ENCODE measurements at regions of chr2 and their contacts with region 1.

Region 1: DNA sequence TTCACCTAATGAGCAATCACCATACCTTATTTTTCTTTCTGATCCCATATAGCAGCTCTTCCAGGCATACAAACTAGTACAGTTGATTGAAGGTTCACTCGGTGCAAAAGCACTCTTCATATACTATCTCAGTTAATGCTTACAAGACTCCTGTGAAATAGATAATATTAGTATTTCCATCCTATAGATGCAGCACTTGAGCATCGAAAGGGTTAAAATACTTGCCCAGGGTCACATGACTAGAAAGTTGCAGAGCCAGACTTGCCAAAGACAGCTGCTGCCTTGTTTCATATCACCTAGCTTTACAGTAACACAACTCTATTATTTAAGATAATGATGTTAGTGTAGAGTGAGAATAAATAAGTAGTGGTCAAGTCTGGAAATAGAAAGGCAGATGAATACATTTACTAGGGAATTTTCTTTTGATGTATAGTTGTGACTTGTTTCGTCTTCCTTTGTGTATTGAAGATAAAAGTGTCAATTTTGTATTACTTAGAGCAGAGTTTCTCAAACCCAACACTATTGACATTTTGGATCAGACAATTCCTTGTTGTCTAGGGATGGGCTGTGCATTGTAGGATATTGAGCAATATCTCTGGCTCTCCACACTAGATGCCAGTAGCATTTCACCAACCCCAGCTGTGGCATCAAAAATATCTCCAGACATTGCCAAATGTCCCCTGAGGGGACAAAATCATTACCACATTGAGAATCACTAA is 466.1 kb upstream of the TNP1 start:
- DNase-seq: no peak
- H3K4me3 ChIP-seq: no peak overlapping the region
- H3K27ac ChIP-seq: peak overlapping the region in 1 of 4 donors; percentile 81
- H3K4me1 ChIP-seq: peaks cover 0 to 43% (median 37%) of the 10 kb centered on the region in 4 donors
- H3K27me3 ChIP-seq: no peaks in the 10 kb centered on the region
- CTCF ChIP-seq: no peak
- EP300 ChIP-seq: no peak
- POLR2A ChIP-seq: no peak

Region 2: DNA sequence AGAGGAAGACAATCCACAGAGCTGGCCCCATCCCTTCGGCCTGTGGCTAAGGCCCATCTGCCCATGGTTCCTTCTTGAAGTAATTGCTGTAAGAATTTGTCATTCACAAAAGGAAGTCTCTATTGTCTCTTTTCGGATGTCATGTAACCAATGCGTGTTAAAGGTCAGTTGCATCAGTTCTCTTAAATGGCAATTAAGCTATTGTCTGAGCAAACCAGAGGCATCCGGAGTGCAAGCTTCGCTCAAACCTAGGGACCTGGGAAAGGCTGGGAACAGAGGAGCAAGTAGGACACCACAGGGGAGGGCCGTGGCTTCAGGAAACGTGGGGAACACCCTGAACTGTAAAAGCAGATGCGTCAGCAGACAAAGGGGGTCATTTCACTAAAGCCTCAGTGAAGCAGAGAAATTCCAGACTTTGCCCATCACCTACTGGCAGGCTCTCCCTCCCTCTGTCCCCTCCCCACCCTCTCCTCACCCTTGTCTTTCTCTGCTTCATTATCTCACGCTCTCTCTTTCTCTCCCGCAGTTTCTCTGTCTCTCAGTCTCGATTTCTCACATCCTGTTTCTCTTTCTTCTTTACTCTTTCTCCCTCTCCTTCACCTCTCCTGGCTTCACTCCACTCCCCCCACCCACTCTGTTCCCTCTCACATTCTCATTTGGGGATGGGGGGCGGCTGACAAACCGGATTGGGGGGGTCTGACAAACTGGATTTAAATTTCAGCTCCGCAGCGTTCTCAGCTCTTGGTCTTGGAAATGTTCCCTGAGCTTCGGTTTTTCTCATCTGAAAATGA is 261.6 kb before region 1 on chr2:
- intact Hi-C with region 1: loop called (anchors 5 kb)
- DNase-seq: peak; percentile 74
- H3K4me3 ChIP-seq: peak overlapping the region in 3 of 4 donors; percentile 22 to 32 (median 25)
- H3K27ac ChIP-seq: peak overlapping the region in 3 of 4 donors; percentile 70 to 79 (median 75)
- H3K4me1 ChIP-seq: peaks cover 0 to 45% (median 32%) of the 10 kb centered on the region in 4 donors
- H3K27me3 ChIP-seq: no peaks in the 10 kb centered on the region
- CTCF ChIP-seq: no peak
- EP300 ChIP-seq: peak in 1 of 4 donors; percentile 58
- POLR2A ChIP-seq: no peak

Region 3: DNA sequence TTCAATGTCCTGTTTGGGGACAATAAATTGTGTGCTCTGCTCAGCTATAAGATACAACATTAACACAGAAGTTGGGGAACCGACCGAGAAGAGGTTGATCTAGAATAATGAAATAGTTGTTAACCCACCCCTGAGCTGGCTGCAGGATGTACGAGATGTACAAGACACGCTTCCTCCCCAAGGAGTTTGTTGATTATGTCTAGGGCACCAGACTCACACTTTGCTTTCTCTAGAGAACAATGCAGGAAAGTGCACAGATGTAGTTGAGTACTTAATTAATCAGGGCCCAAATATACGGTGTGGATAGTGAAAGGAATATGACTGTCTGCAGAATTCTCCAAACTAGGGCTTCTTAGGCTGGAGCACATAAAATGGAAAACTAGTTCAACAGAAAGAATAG is 50.9 kb before region 1 on chr2:
- intact Hi-C with region 1: loop called (anchors 2 kb)
- DNase-seq: no peak
- H3K4me3 ChIP-seq: no peak overlapping the region
- H3K27ac ChIP-seq: peak overlapping the region in 3 of 4 donors; percentile 73 to 84 (median 76)
- H3K4me1 ChIP-seq: peaks cover 0 to 66% (median 46%) of the 10 kb centered on the region in 4 donors
- H3K27me3 ChIP-seq: no peaks in the 10 kb centered on the region
- CTCF ChIP-seq: no peak
- EP300 ChIP-seq: no peak
- POLR2A ChIP-seq: no peak

Region 4: GRCh38 chr2:217510771-217511291 is 184.9 kb after region 1 on chr2:
- intact Hi-C with region 1: loop called (anchors 5 kb)
- DNase-seq: peak; percentile 85
- H3K4me3 ChIP-seq: no peak overlapping the region
- H3K27ac ChIP-seq: peak overlapping the region in 3 of 4 donors; percentile 3 to 39 (median 18)
- H3K4me1 ChIP-seq: peaks cover 0 to 39% (median 15%) of the 10 kb centered on the region in 4 donors
- H3K27me3 ChIP-seq: no peaks in the 10 kb centered on the region
- CTCF ChIP-seq: peak; percentile 58 to 88 (median 82)
- EP300 ChIP-seq: peak in 1 of 4 donors; percentile 24
- POLR2A ChIP-seq: no peak